ENCODE measurements at regions of chr5 and their contacts with region 1.

Region 1: GRCh38 chr5:172714491-172715421 is 56.2 kb downstream of the DUSP1 start:
- DNase-seq: peak; percentile 78
- H3K4me3 ChIP-seq: no peak overlapping the region
- H3K27ac ChIP-seq: 0 out of 2 replicates have a peak overlapping the region, but pooled peaks have one; percentile 5
- H3K4me1 ChIP-seq: peaks cover 10% of the 10 kb centered on the region
- H3K27me3 ChIP-seq: no peaks in the 10 kb centered on the region

Region 2: DNA sequence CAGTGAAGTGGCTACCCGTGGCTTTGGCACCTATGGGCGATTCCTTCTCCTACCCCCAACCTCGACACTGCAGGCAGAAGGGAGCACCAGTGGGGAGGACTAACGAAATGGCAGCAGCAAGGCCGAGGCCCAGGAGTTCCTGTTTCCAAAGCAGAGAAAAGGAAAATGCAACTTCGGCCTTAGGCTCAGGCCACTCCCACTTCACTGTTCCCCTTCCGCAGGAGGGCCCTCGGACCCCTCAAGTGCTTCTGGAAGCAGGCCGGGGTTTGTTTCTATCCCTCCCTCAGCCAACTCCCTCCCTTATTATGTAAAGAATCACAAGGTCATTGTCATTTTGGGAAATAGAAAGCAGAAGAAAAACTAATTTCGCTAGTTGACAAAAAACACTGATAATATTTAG is 556.7 kb after region 1 on chr5:
- in situ Hi-C with region 1: loop called (anchors 25 kb)
- DNase-seq: no peak
- H3K4me3 ChIP-seq: no peak overlapping the region
- H3K27ac ChIP-seq: no peak overlapping the region
- H3K4me1 ChIP-seq: no peaks in the 10 kb centered on the region
- H3K27me3 ChIP-seq: peaks cover 43% of the 10 kb centered on the region

Measured in GM23248 (cell line).